HepG2 (cell line): ENCODE measurements at regions of chr1 and their contacts with region 1.

Region 1: GRCh38 chr1:162596514-162597170 is 35.1 kb downstream of the UAP1 start:
- DNase-seq: peak; percentile 83
- ATAC-seq: peak; percentile 89
- H3K4me3 ChIP-seq: no peak overlapping the region; a peak in 2 of 6 replicates
- H3K27ac ChIP-seq: peak overlapping the region; percentile 85
- H3K4me1 ChIP-seq: peaks cover 29% of the 10 kb centered on the region
- H3K27me3 ChIP-seq: no peaks in the 10 kb centered on the region
- CTCF ChIP-seq: no peak
- EP300 ChIP-seq: peak in 1 of 2 experiments; percentile 73; a peak in 2 of 4 replicates
- POLR2A ChIP-seq: no peak
- RAD21 ChIP-seq: no peak

Region 2: GRCh38 chr1:162548170-162548569 is 48.5 kb before region 1 on chr1:
- CTCF ChIA-PET with region 1: no interaction called
- POLR2A ChIA-PET with region 1: no interaction called
- in situ Hi-C with region 1: no loop called
- intact Hi-C with region 1: no loop called
- DNase-seq: no peak
- ATAC-seq: no peak
- H3K4me3 ChIP-seq: no peak overlapping the region
- H3K27ac ChIP-seq: no peak overlapping the region
- H3K4me1 ChIP-seq: no peaks in the 10 kb centered on the region
- H3K27me3 ChIP-seq: no peaks in the 10 kb centered on the region
- CTCF ChIP-seq: no peak
- EP300 ChIP-seq: no peak
- POLR2A ChIP-seq: no peak
- RAD21 ChIP-seq: no peak

Region 3: GRCh38 chr1:162561037-162561616 is 35.5 kb before region 1 on chr1:
- CTCF ChIA-PET with region 1: no interaction called
- POLR2A ChIA-PET with region 1: interaction called, 9 read pairs
- in situ Hi-C with region 1: no loop called
- intact Hi-C with region 1: loop called (anchors 5 kb)
- DNase-seq: peak; percentile 93
- ATAC-seq: peak; percentile 94
- H3K4me3 ChIP-seq: peak overlapping the region; percentile 79 to 100 (median 96)
- H3K27ac ChIP-seq: peak overlapping the region; percentile 95
- H3K4me1 ChIP-seq: peaks cover 43% of the 10 kb centered on the region
- H3K27me3 ChIP-seq: no peaks in the 10 kb centered on the region; a peak in 1 of 5 replicates
- CTCF ChIP-seq: no peak
- EP300 ChIP-seq: no peak
- POLR2A ChIP-seq: peak in 1 of 2 experiments; percentile 28; a peak in 2 of 4 replicates
- RAD21 ChIP-seq: no peak

Region 4: DNA sequence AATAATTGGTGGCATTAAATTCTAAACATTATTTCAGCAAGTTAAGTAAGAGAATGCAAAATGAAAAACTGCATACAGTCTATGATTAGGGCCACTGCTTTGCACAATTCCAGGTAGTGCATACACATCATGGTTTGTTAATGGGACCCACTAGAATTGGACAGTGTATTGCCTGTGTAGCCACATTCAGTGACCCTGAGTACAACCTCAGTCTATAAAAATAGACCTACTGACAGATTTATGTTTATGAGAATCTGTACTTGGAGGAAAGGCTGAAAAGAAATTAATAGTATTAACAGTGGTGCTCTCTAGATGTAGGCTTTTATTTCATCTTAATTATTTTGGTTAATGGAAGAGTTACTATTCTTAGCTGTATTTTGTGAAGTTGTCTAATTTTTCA is 16.3 kb before region 1 on chr1:
- CTCF ChIA-PET with region 1: no interaction called
- POLR2A ChIA-PET with region 1: no interaction called
- in situ Hi-C with region 1: no loop called
- intact Hi-C with region 1: no loop called
- DNase-seq: no peak
- ATAC-seq: no peak
- H3K4me3 ChIP-seq: no peak overlapping the region
- H3K27ac ChIP-seq: no peak overlapping the region
- H3K4me1 ChIP-seq: no peaks in the 10 kb centered on the region
- H3K27me3 ChIP-seq: no peaks in the 10 kb centered on the region
- CTCF ChIP-seq: no peak
- EP300 ChIP-seq: no peak
- POLR2A ChIP-seq: no peak
- RAD21 ChIP-seq: no peak